ENCODE measurements at regions of chr4 and their contacts with region 1.

Region 1: DNA sequence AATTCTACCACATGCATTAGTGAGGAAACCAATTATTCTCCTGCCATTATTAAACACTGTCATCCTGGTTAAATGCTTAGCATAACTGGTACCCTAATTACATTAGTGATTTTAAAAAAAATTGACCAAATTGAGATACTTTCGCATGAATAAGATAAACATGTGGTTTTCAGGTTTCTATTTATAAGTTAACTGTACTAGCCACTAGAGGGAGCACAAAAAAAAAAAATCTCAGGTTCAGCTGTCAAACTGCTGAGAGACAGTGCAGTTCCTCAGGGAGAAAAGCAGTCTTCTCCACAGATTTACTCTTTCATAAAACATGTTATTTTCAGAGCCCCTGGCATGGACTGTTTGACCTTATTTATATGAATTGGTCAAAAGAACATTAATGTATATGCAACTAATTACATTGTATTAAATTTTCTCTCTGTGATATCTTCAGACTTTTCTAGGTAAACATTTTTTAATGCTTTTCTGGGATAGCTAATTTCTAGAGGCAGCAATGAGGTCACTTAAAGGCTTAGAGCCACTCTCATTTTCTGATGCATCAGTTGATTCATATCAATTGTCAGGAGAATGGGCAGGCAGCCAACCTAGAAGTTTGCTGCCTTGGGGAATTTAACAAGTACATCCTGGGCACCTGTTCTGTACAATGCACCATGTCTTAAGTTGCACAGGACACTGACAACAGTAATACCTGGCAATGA is 167.5 kb downstream of the CDS1 start:
- DNase-seq: no peak
- H3K4me3 Mint-ChIP-seq: no peak overlapping the region
- H3K27ac Mint-ChIP-seq: no peak overlapping the region
- H3K4me1 Mint-ChIP-seq: no peaks in the 10 kb centered on the region
- H3K27me3 Mint-ChIP-seq: peaks cover 4% of the 10 kb centered on the region

Region 2: DNA sequence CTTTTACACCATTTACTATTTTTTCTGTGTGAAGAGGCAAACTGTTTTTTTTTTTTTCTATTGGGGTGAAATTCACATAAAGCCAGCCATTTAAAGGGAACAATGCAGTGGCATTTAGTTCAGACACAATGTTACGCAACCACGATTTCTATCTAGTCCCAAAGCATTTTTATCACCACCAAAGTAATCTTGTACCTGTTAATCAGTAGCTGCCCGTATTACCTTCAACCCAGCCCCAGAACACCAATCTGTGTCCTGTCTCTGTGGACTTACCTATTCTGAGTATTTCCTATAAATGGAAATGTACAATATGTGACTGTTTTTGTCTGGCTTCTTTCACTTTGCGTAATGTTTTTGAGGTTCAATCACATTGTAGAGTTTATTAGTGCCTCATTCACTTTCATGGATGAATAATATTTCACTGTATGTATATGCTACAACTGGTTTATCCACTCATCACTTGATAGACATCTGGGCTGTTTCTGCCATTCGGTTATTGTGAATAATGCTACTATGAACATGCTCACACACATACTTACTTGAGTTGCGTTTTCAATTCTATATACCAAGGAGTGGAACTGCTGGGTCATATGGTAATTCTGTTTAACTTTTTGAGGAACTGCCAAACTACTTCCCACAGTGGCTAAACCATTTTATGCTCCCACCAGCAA is 51.3 kb before region 1 on chr4:
- CTCF ChIA-PET with region 1: no interaction called
- POLR2A ChIA-PET with region 1: no interaction called
- intact Hi-C with region 1: no loop called
- DNase-seq: no peak
- H3K4me3 Mint-ChIP-seq: no peak overlapping the region
- H3K27ac Mint-ChIP-seq: no peak overlapping the region
- H3K4me1 Mint-ChIP-seq: peaks cover 3% of the 10 kb centered on the region
- H3K27me3 Mint-ChIP-seq: peaks cover 6% of the 10 kb centered on the region

Region 3: DNA sequence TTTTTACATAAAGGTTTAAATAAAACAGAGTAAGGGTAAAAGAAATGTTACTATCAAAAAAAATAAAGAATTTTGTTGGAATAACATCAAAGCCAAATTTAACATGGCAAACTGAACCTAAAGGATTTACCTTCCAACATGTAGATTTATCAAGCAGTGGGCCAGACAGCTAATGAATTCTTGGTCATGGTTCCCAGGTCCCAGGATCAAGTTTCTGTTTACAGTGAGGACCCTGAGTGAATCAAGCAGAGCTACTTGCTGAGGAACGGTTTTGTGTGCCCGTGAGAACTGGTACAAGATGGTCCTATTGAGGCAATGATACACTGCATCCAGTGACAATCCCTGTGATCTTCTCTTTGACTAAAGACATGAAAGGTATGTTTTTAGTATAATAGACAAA is 10.3 kb before region 1 on chr4:
- CTCF ChIA-PET with region 1: interaction called, 22 read pairs
- POLR2A ChIA-PET with region 1: no interaction called
- intact Hi-C with region 1: no loop called
- DNase-seq: no peak
- H3K4me3 Mint-ChIP-seq: no peak overlapping the region
- H3K27ac Mint-ChIP-seq: no peak overlapping the region
- H3K4me1 Mint-ChIP-seq: no peaks in the 10 kb centered on the region
- H3K27me3 Mint-ChIP-seq: peaks cover 2% of the 10 kb centered on the region

Region 4: GRCh38 chr4:84971319-84971932 is 221.0 kb after region 1 on chr4:
- CTCF ChIA-PET with region 1: interaction called, 21 read pairs
- POLR2A ChIA-PET with region 1: no interaction called
- intact Hi-C with region 1: loop called (anchors 1 kb)
- DNase-seq: no peak
- H3K4me3 Mint-ChIP-seq: no peak overlapping the region
- H3K27ac Mint-ChIP-seq: no peak overlapping the region
- H3K4me1 Mint-ChIP-seq: peaks cover 8% of the 10 kb centered on the region
- H3K27me3 Mint-ChIP-seq: peaks cover 16% of the 10 kb centered on the region